ENCODE measurements at regions of chr2 and their contacts with region 1.

Region 1: DNA sequence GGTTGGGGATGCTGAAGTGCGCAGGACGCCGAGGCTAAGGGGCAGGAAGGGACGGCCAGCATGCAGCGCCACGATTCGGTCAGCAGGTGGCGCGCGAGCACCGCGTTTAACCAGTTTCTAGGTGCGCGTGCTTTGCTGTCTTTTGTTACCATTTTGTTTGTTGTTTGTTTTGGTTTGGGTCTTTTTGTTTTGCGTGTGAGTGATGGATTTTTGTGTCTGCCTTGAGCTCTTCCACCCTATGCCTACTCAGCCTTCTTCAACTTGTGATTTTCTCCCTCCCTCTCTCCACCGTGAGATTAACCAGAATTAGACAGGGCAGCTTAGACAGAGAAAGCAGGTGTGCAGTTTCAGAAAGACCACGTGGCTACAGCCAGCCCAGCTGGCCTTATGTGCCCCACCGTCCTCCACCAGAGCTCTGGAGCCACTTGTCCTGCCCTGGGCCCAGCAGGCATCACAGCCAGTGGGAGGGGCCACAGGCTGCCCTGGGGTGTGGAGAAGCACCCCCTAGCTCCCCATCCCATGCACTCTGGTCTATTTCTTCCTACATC is 180.2 kb downstream of the RNF144A start:
- DNase-seq: peak; percentile 86
- ATAC-seq: peak; percentile 95
- H3K4me3 Mint-ChIP-seq: peak overlapping the region; percentile 39
- H3K27ac Mint-ChIP-seq: peak overlapping the region; percentile 27
- H3K4me1 Mint-ChIP-seq: peaks cover 6% of the 10 kb centered on the region
- H3K27me3 Mint-ChIP-seq: no peaks in the 10 kb centered on the region

Region 2: GRCh38 chr2:6657855-6658254 is 439.6 kb before region 1 on chr2:
- CTCF ChIA-PET with region 1: no interaction called
- POLR2A ChIA-PET with region 1: no interaction called
- intact Hi-C with region 1: no loop called
- DNase-seq: no peak
- ATAC-seq: no peak
- H3K4me3 Mint-ChIP-seq: no peak overlapping the region
- H3K27ac Mint-ChIP-seq: no peak overlapping the region
- H3K4me1 Mint-ChIP-seq: no peaks in the 10 kb centered on the region
- H3K27me3 Mint-ChIP-seq: peaks cover 2% of the 10 kb centered on the region

Region 3: DNA sequence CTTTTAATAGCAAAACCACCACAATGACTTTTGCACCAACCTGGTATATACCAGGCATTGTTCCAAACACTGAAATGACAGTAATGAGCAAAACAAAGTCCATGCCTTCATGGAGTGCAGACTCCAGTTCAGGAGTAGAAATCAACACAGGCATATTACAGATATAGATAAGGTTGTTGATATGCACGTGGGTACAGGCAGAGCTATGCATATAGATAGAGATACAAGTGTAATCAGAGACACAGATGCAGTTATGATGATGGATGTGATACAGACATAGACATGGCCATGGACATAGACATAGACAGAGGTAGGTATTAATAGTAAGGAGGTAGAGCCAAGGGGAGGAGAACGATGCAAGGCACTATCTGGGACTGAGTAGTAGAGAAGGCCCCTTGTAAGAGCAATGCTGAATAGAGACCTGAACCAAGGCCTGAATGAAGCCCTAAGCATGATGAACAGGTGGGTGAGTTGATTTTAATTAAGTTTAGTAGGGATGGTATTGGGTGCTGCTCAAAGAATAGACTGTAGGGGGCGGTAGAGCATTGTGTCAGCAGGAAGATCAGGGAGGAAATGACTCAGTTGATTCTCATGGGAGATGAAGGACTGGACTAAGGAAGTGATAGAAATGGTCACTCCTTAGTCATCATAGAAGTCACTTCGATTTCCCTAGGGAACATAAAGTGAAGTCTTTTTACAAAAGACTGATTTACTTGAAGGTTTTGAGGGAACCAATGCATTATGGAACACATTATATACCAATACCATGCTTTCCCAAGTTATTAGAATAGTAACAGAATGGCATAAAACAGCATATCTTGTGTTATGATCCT is 271.1 kb before region 1 on chr2:
- CTCF ChIA-PET with region 1: no interaction called
- POLR2A ChIA-PET with region 1: no interaction called
- intact Hi-C with region 1: loop called (anchors 1 to 5 kb)
- DNase-seq: peak; percentile 78
- ATAC-seq: peak; percentile 97
- H3K4me3 Mint-ChIP-seq: no peak overlapping the region
- H3K27ac Mint-ChIP-seq: no peak overlapping the region
- H3K4me1 Mint-ChIP-seq: peaks cover 9% of the 10 kb centered on the region
- H3K27me3 Mint-ChIP-seq: no peaks in the 10 kb centered on the region

Region 4: GRCh38 chr2:7118606-7119503 is 21.4 kb after region 1 on chr2:
- CTCF ChIA-PET with region 1: interaction called, 15 read pairs
- POLR2A ChIA-PET with region 1: interaction called, 4 read pairs
- intact Hi-C with region 1: no loop called
- DNase-seq: peak; percentile 44
- ATAC-seq: no peak
- H3K4me3 Mint-ChIP-seq: no peak overlapping the region
- H3K27ac Mint-ChIP-seq: no peak overlapping the region
- H3K4me1 Mint-ChIP-seq: no peaks in the 10 kb centered on the region
- H3K27me3 Mint-ChIP-seq: no peaks in the 10 kb centered on the region

Region 5: GRCh38 chr2:7203055-7203467 is 105.6 kb after region 1 on chr2:
- CTCF ChIA-PET with region 1: interaction called, 3 read pairs
- POLR2A ChIA-PET with region 1: no interaction called
- intact Hi-C with region 1: loop called in 1 of 2 experiments (anchors 5 kb)
- DNase-seq: peak; percentile 78
- ATAC-seq: peak; percentile 55
- H3K4me3 Mint-ChIP-seq: no peak overlapping the region
- H3K27ac Mint-ChIP-seq: no peak overlapping the region
- H3K4me1 Mint-ChIP-seq: peaks cover 1% of the 10 kb centered on the region
- H3K27me3 Mint-ChIP-seq: no peaks in the 10 kb centered on the region

Region 6: DNA sequence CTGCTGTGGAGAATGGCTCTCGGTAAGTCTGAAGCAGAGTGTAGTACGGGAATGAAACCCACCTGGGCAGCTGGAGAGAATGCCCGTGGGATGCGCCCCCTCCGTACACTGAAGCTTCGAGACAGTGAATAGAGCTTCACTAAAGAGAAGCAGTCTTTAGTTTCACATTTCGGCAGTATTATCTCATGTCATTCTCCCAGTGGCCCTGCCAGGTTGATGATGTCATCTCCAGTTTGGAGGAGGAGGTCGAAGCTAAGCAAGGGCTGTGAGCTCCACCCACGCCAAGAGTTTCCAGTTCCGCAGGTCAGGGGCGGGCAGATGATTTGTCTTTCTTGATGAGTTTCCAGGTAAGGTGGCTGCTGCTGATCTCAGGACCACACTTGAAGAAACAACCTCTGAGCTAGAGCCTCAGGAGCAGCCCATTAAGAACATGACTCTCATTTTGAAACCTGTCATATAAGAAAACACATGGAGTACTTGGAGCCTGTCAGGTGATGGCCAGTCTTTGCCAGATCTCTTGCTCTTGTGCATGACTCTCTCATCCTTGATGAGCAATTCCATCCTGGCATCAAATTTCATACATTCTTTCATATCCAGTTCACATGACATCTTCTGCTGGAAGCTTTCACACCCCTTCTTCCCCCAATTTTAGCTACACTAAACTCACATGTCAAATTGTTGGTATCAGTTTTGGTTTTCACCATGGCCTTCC is 294.8 kb after region 1 on chr2:
- CTCF ChIA-PET with region 1: no interaction called
- POLR2A ChIA-PET with region 1: no interaction called
- intact Hi-C with region 1: no loop called
- DNase-seq: peak; percentile 22
- ATAC-seq: peak; percentile 61
- H3K4me3 Mint-ChIP-seq: no peak overlapping the region
- H3K27ac Mint-ChIP-seq: no peak overlapping the region
- H3K4me1 Mint-ChIP-seq: peaks cover 6% of the 10 kb centered on the region
- H3K27me3 Mint-ChIP-seq: peaks cover 3% of the 10 kb centered on the region